AG04450 (cell line): ENCODE measurements at regions of chr11 and their contacts with region 1.

Region 1: GRCh38 chr11:27485930-27486773 is 13.6 kb upstream of the LGR4 start:
- DNase-seq: no peak
- H3K4me3 ChIP-seq: no peak overlapping the region
- H3K27ac ChIP-seq: no peak overlapping the region
- H3K27me3 ChIP-seq: no peaks in the 10 kb centered on the region
- CTCF ChIP-seq: peak; percentile 95

Region 2: DNA sequence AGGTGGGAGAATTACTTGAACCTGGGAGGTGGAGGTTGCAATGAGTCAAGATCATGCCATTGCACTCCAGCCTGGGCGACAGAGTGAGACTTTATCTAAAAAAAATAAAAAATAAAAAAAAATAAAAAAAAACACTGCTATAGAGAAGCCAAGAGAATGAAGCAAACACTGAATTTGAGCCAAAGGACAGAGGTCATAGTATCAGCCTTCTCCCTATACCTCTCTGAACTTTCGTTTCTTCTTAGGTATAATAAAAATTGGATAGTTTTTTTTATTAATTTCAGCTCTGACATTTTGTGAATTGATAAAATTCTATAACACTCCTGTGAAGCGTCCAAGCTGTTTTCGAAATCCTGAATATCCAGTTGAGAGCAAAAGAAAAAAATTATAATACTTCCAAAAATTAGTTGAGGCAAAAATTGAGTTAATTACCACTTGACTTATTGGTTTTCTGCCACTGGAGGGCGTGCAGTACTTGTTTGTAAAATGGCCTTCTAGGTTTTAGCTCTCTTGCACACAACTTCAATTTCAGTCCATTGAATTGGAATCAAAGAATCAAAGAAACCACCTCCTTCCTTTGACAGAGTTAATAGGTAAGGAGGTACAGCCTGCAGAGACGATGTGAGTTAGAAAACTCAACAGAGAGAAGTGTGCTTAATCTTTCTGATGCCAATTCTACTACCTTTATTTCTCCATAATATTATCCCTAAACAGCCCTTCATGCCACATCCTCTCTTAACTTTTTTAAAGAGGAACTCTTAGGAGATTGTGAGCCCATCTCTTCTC is 302.3 kb before region 1 on chr11:
- CTCF ChIA-PET with region 1: interaction called, 305 read pairs
- POLR2A ChIA-PET with region 1: no interaction called
- DNase-seq: peak; percentile 41
- H3K4me3 ChIP-seq: no peak overlapping the region
- H3K27ac ChIP-seq: no peak overlapping the region
- H3K27me3 ChIP-seq: peaks cover 20% of the 10 kb centered on the region
- CTCF ChIP-seq: peak; percentile 79

Region 3: GRCh38 chr11:27201454-27202236 is 284.5 kb before region 1 on chr11:
- CTCF ChIA-PET with region 1: interaction called, 16 read pairs
- POLR2A ChIA-PET with region 1: no interaction called
- DNase-seq: no peak
- H3K4me3 ChIP-seq: no peak overlapping the region
- H3K27ac ChIP-seq: no peak overlapping the region
- H3K27me3 ChIP-seq: peaks cover 2% of the 10 kb centered on the region
- CTCF ChIP-seq: no peak

Region 4: GRCh38 chr11:27281740-27282590 is 204.2 kb before region 1 on chr11:
- CTCF ChIA-PET with region 1: interaction called, 10 read pairs
- POLR2A ChIA-PET with region 1: no interaction called
- DNase-seq: peak; percentile 72
- H3K4me3 ChIP-seq: no peak overlapping the region
- H3K27ac ChIP-seq: peak overlapping the region; percentile 47
- H3K27me3 ChIP-seq: peaks cover 28% of the 10 kb centered on the region
- CTCF ChIP-seq: no peak

Region 5: DNA sequence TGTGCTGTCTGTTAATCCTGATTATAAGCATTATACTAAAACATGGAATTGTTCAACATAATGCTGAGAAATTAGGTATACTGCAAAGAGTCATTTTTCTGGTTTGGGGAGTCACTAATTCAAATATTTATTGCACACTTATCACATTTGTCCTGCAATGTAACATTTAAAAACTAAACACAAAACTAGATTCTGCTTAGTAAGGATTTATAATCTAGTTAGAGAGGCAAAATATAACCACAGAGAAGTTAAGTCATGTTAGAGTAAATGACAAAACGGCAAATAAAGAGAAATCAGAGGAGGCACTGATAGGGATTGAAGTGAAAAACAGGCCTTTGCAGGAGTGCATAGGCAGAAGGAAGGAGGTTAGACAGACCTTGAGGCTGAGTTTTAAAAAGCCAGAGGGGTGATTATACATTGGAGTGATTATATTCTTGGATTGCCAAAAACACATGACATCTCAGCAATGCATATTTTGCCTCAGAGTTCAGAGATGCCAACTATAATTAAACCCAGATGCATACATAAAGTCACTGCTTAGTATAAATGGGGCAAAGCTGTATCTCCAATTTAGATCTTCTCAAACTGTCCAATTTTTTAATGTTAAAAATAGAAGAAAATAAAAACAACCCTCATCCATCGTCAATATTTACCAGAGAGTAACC is 172.9 kb before region 1 on chr11:
- CTCF ChIA-PET with region 1: interaction called, 14 read pairs
- POLR2A ChIA-PET with region 1: no interaction called
- DNase-seq: no peak
- H3K4me3 ChIP-seq: no peak overlapping the region
- H3K27ac ChIP-seq: no peak overlapping the region
- H3K27me3 ChIP-seq: no peaks in the 10 kb centered on the region
- CTCF ChIP-seq: no peak

Region 6: GRCh38 chr11:27464154-27464759 is 21.9 kb before region 1 on chr11:
- CTCF ChIA-PET with region 1: interaction called, 10 read pairs
- POLR2A ChIA-PET with region 1: no interaction called
- DNase-seq: no peak
- H3K4me3 ChIP-seq: no peak overlapping the region
- H3K27ac ChIP-seq: no peak overlapping the region
- H3K27me3 ChIP-seq: no peaks in the 10 kb centered on the region
- CTCF ChIP-seq: no peak

Region 7: DNA sequence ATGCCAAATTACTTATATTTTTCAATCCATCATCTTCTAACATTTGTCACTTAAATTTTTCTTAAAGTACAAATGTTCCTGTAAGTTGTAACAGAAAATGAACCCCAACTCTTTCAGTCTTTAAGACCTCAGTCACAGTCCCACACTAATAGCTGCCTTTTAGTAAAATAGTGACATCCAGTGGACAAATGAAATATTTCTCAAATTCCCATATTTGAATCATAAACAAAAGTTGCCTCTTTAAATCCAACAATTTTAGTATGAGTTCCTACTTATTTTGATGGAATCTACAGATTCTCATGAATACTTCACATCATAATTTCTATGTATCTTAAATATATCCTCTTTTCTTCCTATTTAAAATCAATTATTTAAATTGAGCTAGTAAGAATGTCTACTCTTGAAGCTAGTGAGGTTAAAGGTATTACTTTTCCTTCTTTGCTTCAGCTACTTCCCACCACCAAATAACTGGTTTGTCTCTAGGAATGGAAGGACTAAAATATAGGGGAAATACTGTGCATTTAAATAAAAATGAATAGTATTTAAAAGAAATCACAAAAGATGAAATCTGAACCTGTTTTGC is 11.2 kb after region 1 on chr11:
- CTCF ChIA-PET with region 1: interaction called, 91 read pairs
- POLR2A ChIA-PET with region 1: no interaction called
- DNase-seq: no peak
- H3K4me3 ChIP-seq: no peak overlapping the region
- H3K27ac ChIP-seq: no peak overlapping the region
- H3K27me3 ChIP-seq: no peaks in the 10 kb centered on the region
- CTCF ChIP-seq: peak; percentile 44

Region 8: DNA sequence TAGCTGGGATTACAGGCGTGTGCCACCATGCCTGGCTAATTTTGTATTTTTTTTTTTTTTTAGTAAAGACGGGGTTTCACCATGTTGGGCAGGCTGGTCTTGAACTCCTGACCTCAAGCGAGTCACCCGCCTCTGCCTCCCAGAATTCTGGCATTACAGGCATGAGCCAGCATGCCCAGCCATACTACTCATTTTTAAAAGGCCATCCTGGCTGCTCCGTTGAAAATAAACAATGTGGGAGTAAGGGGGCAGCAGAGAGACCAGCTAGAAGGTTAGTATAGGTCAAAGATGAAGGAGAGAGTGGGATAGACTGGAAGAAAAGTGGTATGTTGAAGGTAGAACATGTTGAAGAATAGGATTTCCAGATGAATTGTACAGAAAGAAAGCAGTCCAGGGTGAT is 38.0 kb after region 1 on chr11:
- CTCF ChIA-PET with region 1: no interaction called
- POLR2A ChIA-PET with region 1: no interaction called
- DNase-seq: no peak
- H3K4me3 ChIP-seq: no peak overlapping the region
- H3K27ac ChIP-seq: no peak overlapping the region
- H3K27me3 ChIP-seq: no peaks in the 10 kb centered on the region
- CTCF ChIP-seq: peak; percentile 29